IMR-90 (cell line): ENCODE measurements at regions of chr1 and their contacts with region 1.

Region 1: DNA sequence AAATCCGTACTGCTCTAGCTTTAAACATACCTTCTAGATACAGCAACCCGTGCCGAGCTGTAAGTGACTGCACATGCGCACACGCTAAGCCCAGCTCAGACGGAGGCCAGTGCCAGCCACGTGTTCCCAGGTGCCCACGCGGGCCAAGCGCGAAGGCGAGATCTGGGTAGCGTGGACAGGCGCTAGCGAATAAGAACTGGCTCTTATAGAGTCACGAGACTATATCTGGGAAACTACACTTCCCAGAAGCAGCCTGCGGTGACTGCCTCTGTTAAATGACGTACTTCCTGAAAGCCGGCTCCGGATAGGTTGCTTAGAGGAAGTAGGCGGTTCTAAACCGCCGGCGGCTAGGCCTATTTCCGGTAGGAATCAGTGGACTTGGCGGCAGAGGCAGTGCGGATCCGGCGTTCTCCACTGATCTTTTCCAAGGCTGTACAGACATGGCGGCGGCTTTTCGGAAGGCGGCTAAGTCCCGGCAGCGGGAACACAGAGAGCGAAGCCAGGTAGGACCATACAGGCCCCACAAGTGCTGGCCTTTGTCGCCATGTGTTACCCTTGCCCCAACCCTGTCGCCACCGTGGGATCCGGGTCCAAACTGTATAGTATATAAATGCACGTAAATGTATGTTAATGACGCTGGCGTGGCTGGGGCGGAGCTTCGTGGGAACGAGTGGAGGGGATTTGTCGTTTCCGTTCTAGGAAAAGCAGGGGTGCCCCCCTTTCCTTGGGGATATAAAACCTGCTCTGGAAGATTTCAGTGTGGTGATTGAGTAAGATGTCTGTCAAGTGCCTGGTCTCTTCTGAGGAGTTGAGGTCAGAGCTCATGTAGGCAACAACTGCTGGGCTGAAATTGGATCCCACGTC is at the start of gene UTP11:
- DNase-seq: peak; percentile 100
- ATAC-seq: peak; percentile 93
- H3K4me3 ChIP-seq: peak within 1 kb of the TSS; percentile 80
- H3K27ac ChIP-seq: peak within 1 kb of the TSS; percentile 95
- H3K4me1 ChIP-seq: peaks cover 4% of the 10 kb centered on the region; the same call in 1 of the 2 replicates
- H3K27me3 ChIP-seq: no peaks in the 10 kb centered on the region
- CTCF ChIP-seq: no peak
- POLR2A ChIP-seq: peak; percentile 92
- RAD21 ChIP-seq: no peak
- total RNA-seq, gene UTP11: 27.8 and 58.3 TPM in 2 replicates

Region 2: DNA sequence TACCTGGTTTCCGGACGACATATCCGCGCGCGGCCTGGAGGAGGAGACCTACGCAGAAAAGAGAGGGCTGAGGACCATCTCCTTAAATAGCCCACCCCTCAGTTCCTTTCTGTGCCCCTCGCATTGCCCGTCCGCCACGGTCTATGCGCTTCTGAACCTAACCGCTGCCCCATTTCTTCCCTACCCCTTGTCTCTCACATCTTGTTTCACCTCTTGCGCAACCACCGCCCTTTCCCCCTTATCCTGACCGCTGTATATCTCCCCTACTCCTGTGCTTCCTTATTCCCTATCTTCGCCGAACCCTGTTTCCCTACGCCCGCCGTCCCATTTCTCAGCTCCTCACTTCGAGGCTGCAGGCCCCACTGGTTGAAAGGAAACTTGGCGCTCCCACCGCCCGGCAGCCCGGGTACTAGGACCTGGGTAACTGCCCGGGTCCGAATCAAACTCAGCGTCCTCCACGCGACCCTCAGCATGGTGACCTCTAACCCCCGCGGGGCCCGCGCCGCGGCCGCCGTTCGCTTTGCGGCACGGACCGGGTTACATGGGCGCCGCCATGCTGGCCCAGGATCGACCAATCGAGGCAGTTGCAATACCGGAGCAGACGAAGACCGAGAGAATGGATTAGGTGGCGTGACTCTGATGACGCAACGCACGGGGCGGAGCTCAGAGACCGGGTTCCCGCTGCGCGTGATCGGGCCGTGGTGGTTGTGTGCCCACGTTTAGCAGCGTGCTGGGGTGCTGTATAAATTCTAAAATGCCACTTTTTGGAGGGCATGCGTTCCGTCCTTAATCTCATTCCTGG is 1548.6 kb before region 1 on chr1 and contains the start of gene MRPS15:
- CTCF ChIA-PET with region 1: no interaction called
- POLR2A ChIA-PET with region 1: no interaction called
- dilution Hi-C with region 1: no loop called
- in situ Hi-C with region 1: loop called (anchors 25 kb)
- intact Hi-C with region 1: no loop called
- DNase-seq: peak; percentile 95
- ATAC-seq: peak; percentile 98
- H3K4me3 ChIP-seq: peak within 1 kb of the TSS; percentile 90
- H3K27ac ChIP-seq: peak within 1 kb of the TSS; percentile 82
- H3K4me1 ChIP-seq: peaks cover 6% of the 10 kb centered on the region
- H3K27me3 ChIP-seq: no peaks in the 10 kb centered on the region
- CTCF ChIP-seq: no peak
- POLR2A ChIP-seq: peak; percentile 77
- RAD21 ChIP-seq: no peak
- total RNA-seq, gene MRPS15: 46.1 and 64.7 TPM in 2 replicates

Region 3: DNA sequence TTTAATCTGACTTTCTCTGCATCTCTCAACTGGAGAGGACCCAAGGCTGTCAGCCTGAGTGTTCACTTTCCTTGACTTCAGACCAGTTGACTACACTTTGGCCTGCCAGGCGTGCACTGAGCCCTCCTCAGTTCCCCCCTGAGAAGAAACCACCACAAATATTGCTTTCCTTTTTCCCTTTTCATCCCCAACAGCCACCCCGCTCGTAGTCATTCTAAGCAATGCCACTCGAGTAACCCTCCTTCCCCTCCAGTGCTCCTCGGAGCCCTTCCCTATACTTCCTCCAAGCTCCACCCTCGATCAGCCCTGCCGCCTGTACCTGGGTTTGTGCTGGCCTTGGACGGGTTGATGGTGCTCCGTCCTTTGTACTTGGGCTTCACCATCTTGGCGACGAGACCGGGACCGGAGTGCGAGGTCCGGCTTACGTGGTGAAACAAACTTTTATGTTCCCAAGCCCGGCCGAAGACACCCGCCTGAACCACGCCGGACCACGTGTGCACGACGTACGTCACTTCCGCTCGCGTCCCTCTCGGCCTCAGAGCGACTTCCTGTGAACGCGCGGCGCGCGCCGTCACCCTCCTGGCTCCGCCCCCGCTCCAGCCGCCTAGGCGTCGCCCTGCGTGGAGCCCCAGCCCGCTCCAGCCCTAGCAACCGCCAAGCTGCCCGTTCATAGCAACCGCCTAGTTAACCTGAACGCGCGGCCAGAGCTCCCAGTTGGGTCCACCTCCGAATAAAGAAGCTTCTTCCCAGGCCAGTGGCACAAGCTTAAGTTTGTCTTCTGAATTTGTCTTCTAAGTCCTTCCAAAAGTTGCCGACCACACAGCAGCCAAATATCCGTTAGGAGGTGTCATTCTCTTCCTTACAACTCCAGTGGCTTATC is 416.9 kb before region 1 on chr1 and contains the start of gene GNL2:
- CTCF ChIA-PET with region 1: no interaction called
- POLR2A ChIA-PET with region 1: no interaction called
- dilution Hi-C with region 1: no loop called
- in situ Hi-C with region 1: loop called (anchors 25 kb)
- intact Hi-C with region 1: no loop called
- DNase-seq: peak; percentile 95
- ATAC-seq: peak; percentile 100
- H3K4me3 ChIP-seq: peak within 1 kb of the TSS; percentile 80
- H3K27ac ChIP-seq: peak within 1 kb of the TSS; percentile 88
- H3K4me1 ChIP-seq: peaks cover 3% of the 10 kb centered on the region; the same call in 1 of the 2 replicates
- H3K27me3 ChIP-seq: peaks cover 3% of the 10 kb centered on the region
- CTCF ChIP-seq: no peak
- POLR2A ChIP-seq: peak; percentile 91
- RAD21 ChIP-seq: no peak
- total RNA-seq, gene GNL2: 77.4 and 90.3 TPM in 2 replicates

Region 4: DNA sequence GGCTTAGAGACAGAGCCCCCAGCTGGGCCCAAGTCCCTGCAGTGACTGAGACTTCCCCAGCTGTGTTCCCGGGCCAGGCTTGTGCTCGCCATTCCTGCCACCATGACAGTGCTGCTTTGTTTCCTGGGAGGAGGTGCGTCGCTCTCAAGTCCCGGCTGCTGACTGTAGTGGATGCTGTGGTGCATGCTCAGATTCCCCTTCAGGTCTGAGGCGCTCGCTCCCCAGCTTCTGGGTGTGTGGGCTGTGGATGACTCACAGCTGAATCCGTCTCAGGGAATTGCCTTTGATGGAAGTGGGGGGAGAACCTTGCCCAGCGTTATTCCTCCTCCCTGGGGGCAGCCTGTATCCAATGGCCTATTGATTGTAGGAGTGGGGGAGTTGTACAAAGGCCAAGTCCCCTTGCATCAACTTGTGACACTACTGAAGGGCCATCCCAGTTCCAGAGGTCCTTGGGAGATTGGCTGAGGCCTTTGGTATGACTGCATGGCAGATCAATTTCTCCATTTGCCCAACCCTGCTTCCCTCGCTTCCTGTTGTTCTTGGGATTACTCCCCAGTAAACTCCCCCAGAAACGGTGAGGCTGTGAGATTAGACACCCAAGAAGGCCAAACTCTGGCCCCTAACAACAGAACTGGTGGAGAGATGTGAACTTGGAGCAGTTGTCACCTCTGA is 51.8 kb after region 1 on chr1:
- CTCF ChIA-PET with region 1: no interaction called
- POLR2A ChIA-PET with region 1: no interaction called
- dilution Hi-C with region 1: no loop called
- in situ Hi-C with region 1: no loop called
- intact Hi-C with region 1: no loop called
- DNase-seq: peak; percentile 88
- ATAC-seq: peak; percentile 96
- H3K4me3 ChIP-seq: no peak overlapping the region
- H3K27ac ChIP-seq: no peak overlapping the region
- H3K4me1 ChIP-seq: no peaks in the 10 kb centered on the region
- H3K27me3 ChIP-seq: peaks cover 21% of the 10 kb centered on the region
- CTCF ChIP-seq: no peak
- POLR2A ChIP-seq: no peak
- RAD21 ChIP-seq: no peak

Region 5: GRCh38 chr1:39003794-39004193 is 991.2 kb after region 1 on chr1:
- CTCF ChIA-PET with region 1: no interaction called
- POLR2A ChIA-PET with region 1: no interaction called
- dilution Hi-C with region 1: no loop called
- in situ Hi-C with region 1: loop called (anchors 25 kb)
- intact Hi-C with region 1: no loop called
- DNase-seq: peak; percentile 33
- ATAC-seq: peak; percentile 41
- H3K4me3 ChIP-seq: no peak overlapping the region
- H3K27ac ChIP-seq: no peak overlapping the region
- H3K4me1 ChIP-seq: peaks cover 3% of the 10 kb centered on the region; the same call in 1 of the 2 replicates
- H3K27me3 ChIP-seq: no peaks in the 10 kb centered on the region
- CTCF ChIP-seq: no peak
- POLR2A ChIP-seq: no peak
- RAD21 ChIP-seq: no peak

Region 6: GRCh38 chr1:39434797-39435395 is 1422.3 kb after region 1 on chr1:
- CTCF ChIA-PET with region 1: no interaction called
- POLR2A ChIA-PET with region 1: no interaction called
- dilution Hi-C with region 1: no loop called
- in situ Hi-C with region 1: no loop called
- intact Hi-C with region 1: no loop called
- DNase-seq: peak; percentile 47
- ATAC-seq: peak; percentile 44
- H3K4me3 ChIP-seq: no peak overlapping the region
- H3K27ac ChIP-seq: no peak overlapping the region
- H3K4me1 ChIP-seq: peaks cover 8% of the 10 kb centered on the region
- H3K27me3 ChIP-seq: no peaks in the 10 kb centered on the region
- CTCF ChIP-seq: no peak
- POLR2A ChIP-seq: no peak
- RAD21 ChIP-seq: no peak